H1 (cell line): ENCODE measurements at regions of chr19 and their contacts with region 1.

Region 1: GRCh38 chr19:3471954-3472655 is 8.2 kb downstream of the SMIM24 start:
- DNase-seq: peak in 1 of 2 experiments; percentile 86
- H3K4me3 ChIP-seq: no peak overlapping the region
- H3K27ac ChIP-seq: no peak overlapping the region
- H3K4me1 ChIP-seq: no peaks in the 10 kb centered on the region
- H3K27me3 ChIP-seq: peaks cover 0 to 16% (median 9%) of the 10 kb centered on the region in 4 experiments; a peak in 6 of 7 replicates
- CTCF ChIP-seq: peak; percentile 75 to 85 (median 82)
- EP300 ChIP-seq: no peak
- POLR2A ChIP-seq: no peak
- RAD21 ChIP-seq: peak; percentile 69 to 81

Region 2: DNA sequence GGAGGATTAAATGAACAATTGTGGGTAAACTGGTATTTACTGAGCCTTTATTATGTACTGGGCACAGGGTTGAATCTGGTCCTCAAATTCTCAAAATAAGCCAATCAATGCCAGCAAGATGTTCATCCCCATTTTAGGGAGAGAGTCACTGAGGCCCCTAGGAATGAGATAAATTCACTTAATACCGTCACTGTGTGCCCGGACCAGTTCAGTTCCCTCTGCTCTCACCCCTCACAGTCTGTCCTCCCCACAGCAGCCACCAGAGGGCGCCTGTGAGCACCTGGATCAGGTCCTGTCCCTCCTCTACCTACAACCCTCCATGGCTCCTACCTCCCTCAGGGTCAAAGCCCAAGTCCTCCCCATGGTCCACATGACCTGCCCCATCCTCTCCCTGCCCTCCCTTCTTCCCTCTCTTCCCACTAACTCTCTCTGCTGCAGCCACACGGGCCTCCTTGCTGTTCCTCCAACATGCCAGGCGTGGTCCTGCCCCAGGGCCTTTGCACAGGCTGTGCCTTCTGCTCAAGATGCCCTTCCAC is 147.7 kb before region 1 on chr19:
- CTCF ChIA-PET with region 1: interaction called, 27 read pairs
- POLR2A ChIA-PET with region 1: no interaction called
- DNase-seq: peak in 1 of 2 experiments; percentile 94
- H3K4me3 ChIP-seq: no peak overlapping the region
- H3K27ac ChIP-seq: no peak overlapping the region
- H3K4me1 ChIP-seq: no peaks in the 10 kb centered on the region
- H3K27me3 ChIP-seq: no peaks in the 10 kb centered on the region; a peak in 1 of 7 replicates
- CTCF ChIP-seq: peak; percentile 76 to 93 (median 92)
- EP300 ChIP-seq: no peak
- POLR2A ChIP-seq: no peak
- RAD21 ChIP-seq: peak; percentile 24 to 54; a peak in 3 of 4 replicates

Region 3: GRCh38 chr19:3343619-3344502 is 128.2 kb before region 1 on chr19:
- CTCF ChIA-PET with region 1: interaction called, 17 read pairs
- POLR2A ChIA-PET with region 1: no interaction called
- DNase-seq: no peak
- H3K4me3 ChIP-seq: no peak overlapping the region
- H3K27ac ChIP-seq: no peak overlapping the region
- H3K4me1 ChIP-seq: no peaks in the 10 kb centered on the region
- H3K27me3 ChIP-seq: peaks cover 0 to 2% (median 0%) of the 10 kb centered on the region in 4 experiments; a peak in 3 of 7 replicates
- CTCF ChIP-seq: no peak
- EP300 ChIP-seq: no peak
- POLR2A ChIP-seq: no peak
- RAD21 ChIP-seq: no peak

Region 4: GRCh38 chr19:3403489-3404323 is 68.4 kb before region 1 on chr19:
- CTCF ChIA-PET with region 1: no interaction called
- POLR2A ChIA-PET with region 1: no interaction called
- DNase-seq: no peak
- H3K4me3 ChIP-seq: no peak overlapping the region
- H3K27ac ChIP-seq: no peak overlapping the region
- H3K4me1 ChIP-seq: peaks cover 0 to 5% (median 2%) of the 10 kb centered on the region in 4 experiments; a peak in 3 of 7 replicates
- H3K27me3 ChIP-seq: peaks cover 0 to 3% (median 0%) of the 10 kb centered on the region in 4 experiments; a peak in 1 of 7 replicates
- CTCF ChIP-seq: no peak
- EP300 ChIP-seq: no peak
- POLR2A ChIP-seq: no peak
- RAD21 ChIP-seq: no peak

Region 5: DNA sequence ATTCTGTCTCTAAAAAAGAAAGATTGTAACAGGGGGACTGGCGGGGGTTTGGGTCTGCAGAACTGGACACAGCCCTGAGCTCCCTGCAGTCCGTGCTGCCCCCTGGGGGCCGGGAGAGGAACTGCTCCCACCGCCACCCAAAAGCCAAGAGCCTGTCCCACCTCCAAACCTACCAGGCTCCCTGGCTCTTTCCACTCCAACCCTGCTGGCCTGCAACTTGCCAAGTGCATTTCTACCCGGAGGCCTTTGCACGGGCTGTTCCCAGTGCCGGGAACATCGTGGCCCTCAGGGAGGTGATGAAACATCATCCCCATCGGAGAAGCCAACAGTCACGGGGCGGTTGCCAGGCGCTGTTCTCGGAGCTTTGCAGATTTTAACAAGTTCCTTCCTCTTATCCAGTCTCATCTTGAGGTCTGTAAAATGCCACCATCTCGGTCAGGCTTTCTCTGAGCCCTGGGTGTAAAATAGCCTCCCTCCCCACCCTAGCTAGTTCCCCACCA is 42.5 kb before region 1 on chr19:
- CTCF ChIA-PET with region 1: interaction called, 43 read pairs
- POLR2A ChIA-PET with region 1: no interaction called
- DNase-seq: peak; percentile 46 to 98
- H3K4me3 ChIP-seq: no peak overlapping the region
- H3K27ac ChIP-seq: no peak overlapping the region
- H3K4me1 ChIP-seq: peaks cover 0 to 6% (median 3%) of the 10 kb centered on the region in 4 experiments; a peak in 4 of 7 replicates
- H3K27me3 ChIP-seq: peaks cover 0 to 3% (median 1%) of the 10 kb centered on the region in 4 experiments; a peak in 3 of 7 replicates
- CTCF ChIP-seq: peak; percentile 92 to 96 (median 92)
- EP300 ChIP-seq: no peak
- POLR2A ChIP-seq: no peak
- RAD21 ChIP-seq: peak; percentile 85 to 88

Region 6: GRCh38 chr19:3450796-3451411 is 21.2 kb before region 1 on chr19:
- CTCF ChIA-PET with region 1: interaction called, 66 read pairs
- POLR2A ChIA-PET with region 1: no interaction called
- DNase-seq: no peak
- H3K4me3 ChIP-seq: no peak overlapping the region
- H3K27ac ChIP-seq: no peak overlapping the region
- H3K4me1 ChIP-seq: no peaks in the 10 kb centered on the region
- H3K27me3 ChIP-seq: no peaks in the 10 kb centered on the region
- CTCF ChIP-seq: no peak
- EP300 ChIP-seq: no peak
- POLR2A ChIP-seq: no peak
- RAD21 ChIP-seq: no peak

Region 7: DNA sequence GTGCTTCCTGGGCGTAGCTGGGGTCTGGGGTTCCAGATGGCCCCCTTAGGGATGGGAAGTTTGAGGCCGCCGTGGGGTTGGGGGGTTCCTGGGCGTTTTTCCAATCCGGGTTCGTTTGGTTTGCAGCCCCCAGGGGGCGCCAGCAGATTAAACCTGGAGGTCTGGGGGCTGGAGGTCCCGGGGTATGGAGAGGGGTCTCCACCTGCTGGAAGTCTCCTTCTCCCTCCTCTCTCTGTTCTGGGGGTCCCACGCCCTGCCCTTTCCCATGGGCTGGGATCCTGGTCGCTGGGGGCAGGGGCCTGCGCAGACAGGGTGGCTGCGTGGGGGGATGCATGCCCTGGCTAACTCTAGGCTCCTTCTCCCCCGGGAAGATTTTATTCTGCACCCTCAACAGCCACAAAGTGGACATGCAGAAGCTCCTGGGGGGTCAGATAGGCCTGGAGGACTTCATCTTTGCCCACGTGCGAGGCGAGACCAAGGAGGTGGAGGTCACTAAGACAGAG is 114.1 kb after region 1 on chr19:
- CTCF ChIA-PET with region 1: no interaction called
- POLR2A ChIA-PET with region 1: no interaction called
- DNase-seq: peak in 1 of 2 experiments; percentile 89
- H3K4me3 ChIP-seq: peak overlapping the region in 3 of 4 experiments; percentile 27 to 63 (median 34); a peak in 4 of 8 replicates
- H3K27ac ChIP-seq: no peak overlapping the region
- H3K4me1 ChIP-seq: peaks cover 0 to 4% (median 0%) of the 10 kb centered on the region in 4 experiments; a peak in 3 of 7 replicates
- H3K27me3 ChIP-seq: peaks cover 11 to 21% (median 14%) of the 10 kb centered on the region in 4 experiments; a peak in 6 of 7 replicates
- CTCF ChIP-seq: peak; percentile 64 to 93 (median 66)
- EP300 ChIP-seq: no peak
- POLR2A ChIP-seq: no peak
- RAD21 ChIP-seq: peak; percentile 68 to 81